ENCODE measurements at regions of chr9 and their contacts with region 1.

Region 1: GRCh38 chr9:86282077-86282978 is at the start of gene ISCA1:
- DNase-seq: peak; percentile 99
- ATAC-seq: peak; percentile 86
- H3K4me3 Mint-ChIP-seq: peak within 1 kb of the TSS; percentile 82
- H3K27ac Mint-ChIP-seq: peak within 1 kb of the TSS; percentile 95
- H3K4me1 Mint-ChIP-seq: peaks cover 42% of the 10 kb centered on the region
- H3K27me3 Mint-ChIP-seq: no peaks in the 10 kb centered on the region
- total RNA-seq, gene ISCA1: 27.1 to 27.4 TPM

Region 2: GRCh38 chr9:84570482-84571154 is 1711.7 kb before region 1 on chr9:
- CTCF ChIA-PET with region 1: no interaction called
- POLR2A ChIA-PET with region 1: no interaction called
- intact Hi-C with region 1: no loop called
- DNase-seq: no peak
- ATAC-seq: no peak
- H3K4me3 Mint-ChIP-seq: no peak overlapping the region
- H3K27ac Mint-ChIP-seq: no peak overlapping the region
- H3K4me1 Mint-ChIP-seq: no peaks in the 10 kb centered on the region
- H3K27me3 Mint-ChIP-seq: peaks cover 8% of the 10 kb centered on the region

Region 3: DNA sequence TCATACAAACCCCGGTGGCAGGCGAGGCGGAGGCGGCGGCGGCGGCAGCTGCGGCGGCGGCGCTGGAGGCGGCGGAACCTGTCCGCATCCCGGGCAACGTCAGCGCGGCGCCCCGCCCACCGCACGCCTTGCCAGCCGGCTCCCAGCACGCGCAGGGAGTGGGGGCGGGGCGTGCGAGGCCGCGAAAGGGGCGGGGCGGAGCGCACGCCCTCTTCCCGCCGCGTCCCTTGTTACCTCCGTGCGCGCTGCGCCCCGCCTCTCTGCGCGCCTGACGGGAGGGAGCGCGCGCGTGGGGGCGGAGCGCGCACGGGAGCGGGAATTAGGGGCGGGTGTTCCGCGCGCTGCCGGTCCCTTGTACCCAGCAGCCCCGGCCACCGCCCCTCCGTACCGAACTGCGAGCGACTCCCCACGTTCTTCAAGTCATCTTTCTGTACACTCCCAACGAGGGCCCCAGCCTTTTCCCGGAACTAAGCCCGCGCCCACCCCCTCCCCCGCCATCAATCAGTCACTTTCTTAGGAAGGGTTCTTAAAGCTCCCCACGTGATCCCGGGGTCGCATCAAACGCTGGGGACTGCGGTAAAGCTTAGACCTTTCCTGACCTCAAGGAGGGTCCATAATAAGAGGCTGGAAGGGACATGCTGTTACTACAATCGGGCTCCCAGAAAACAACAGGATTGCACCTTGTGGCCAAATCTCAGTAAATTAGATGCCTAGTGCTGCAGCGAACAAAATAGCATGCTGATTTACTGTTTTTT is 540.3 kb before region 1 on chr9 and contains the start of gene AGTPBP1:
- CTCF ChIA-PET with region 1: no interaction called
- POLR2A ChIA-PET with region 1: no interaction called
- intact Hi-C with region 1: loop called (anchors 1 to 2 kb)
- DNase-seq: peak; percentile 99
- ATAC-seq: peak; percentile 83
- H3K4me3 Mint-ChIP-seq: peak within 1 kb of the TSS; percentile 86
- H3K27ac Mint-ChIP-seq: peak within 1 kb of the TSS; percentile 96
- H3K4me1 Mint-ChIP-seq: peaks cover 38% of the 10 kb centered on the region
- H3K27me3 Mint-ChIP-seq: peaks cover 3% of the 10 kb centered on the region
- total RNA-seq, gene AGTPBP1: 39.8 to 45.9 TPM

Region 4: GRCh38 chr9:86112057-86112456 is 170.3 kb before region 1 on chr9:
- CTCF ChIA-PET with region 1: no interaction called
- POLR2A ChIA-PET with region 1: no interaction called
- intact Hi-C with region 1: loop called in 1 of 2 experiments (anchors 2 kb)
- DNase-seq: no peak
- ATAC-seq: no peak
- H3K4me3 Mint-ChIP-seq: no peak overlapping the region
- H3K27ac Mint-ChIP-seq: no peak overlapping the region
- H3K4me1 Mint-ChIP-seq: peaks cover 1% of the 10 kb centered on the region
- H3K27me3 Mint-ChIP-seq: peaks cover 14% of the 10 kb centered on the region

Region 5: DNA sequence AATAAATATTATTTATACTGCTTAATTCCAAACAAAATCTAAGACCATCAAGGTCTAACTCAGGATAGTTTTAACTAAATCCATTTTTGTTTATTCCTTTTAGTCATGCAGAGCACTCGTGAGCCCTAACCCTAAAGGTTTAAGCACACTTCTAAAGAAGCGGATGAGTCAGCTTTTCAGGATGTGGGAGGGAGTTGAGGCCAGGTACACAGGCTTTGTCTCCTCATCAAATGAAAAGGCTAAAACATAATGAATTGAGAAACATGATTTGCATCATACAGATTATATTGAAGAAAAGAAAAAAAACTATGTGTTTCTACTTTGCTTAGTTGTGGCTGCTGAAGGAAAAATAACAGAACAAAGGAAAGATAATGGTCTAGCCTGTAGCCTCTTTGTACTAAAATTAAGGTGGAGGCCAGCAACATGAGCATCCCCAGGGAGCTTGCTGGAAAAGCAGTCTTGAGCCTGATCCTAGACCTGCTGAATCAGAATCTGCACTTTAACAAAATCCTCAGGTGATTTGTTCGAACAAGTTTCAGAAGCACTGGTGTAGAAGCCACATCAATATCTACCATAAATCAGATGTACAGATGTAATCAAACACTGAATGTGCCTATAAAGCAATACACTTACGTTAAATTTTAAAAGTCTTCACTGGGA is 21.1 kb after region 1 on chr9:
- CTCF ChIA-PET with region 1: no interaction called
- POLR2A ChIA-PET with region 1: interaction called, 3 read pairs
- intact Hi-C with region 1: loop called (anchors 1 kb)
- DNase-seq: peak; percentile 66
- ATAC-seq: peak; percentile 99
- H3K4me3 Mint-ChIP-seq: peak overlapping the region; percentile 17
- H3K27ac Mint-ChIP-seq: peak overlapping the region; percentile 93
- H3K4me1 Mint-ChIP-seq: peaks cover 28% of the 10 kb centered on the region
- H3K27me3 Mint-ChIP-seq: no peaks in the 10 kb centered on the region

Region 6: GRCh38 chr9:87464110-87464965 is 1182.0 kb after region 1 on chr9:
- CTCF ChIA-PET with region 1: no interaction called
- POLR2A ChIA-PET with region 1: no interaction called
- intact Hi-C with region 1: loop called in 1 of 2 experiments (anchors 10 kb)
- DNase-seq: peak; percentile 66
- ATAC-seq: peak; percentile 89
- H3K4me3 Mint-ChIP-seq: no peak overlapping the region
- H3K27ac Mint-ChIP-seq: peak overlapping the region; percentile 84
- H3K4me1 Mint-ChIP-seq: peaks cover 28% of the 10 kb centered on the region
- H3K27me3 Mint-ChIP-seq: peaks cover 2% of the 10 kb centered on the region